Heart right ventricle (tissue), 16 donors: ENCODE measurements at regions of chr17 and their contacts with region 1.

Region 1: DNA sequence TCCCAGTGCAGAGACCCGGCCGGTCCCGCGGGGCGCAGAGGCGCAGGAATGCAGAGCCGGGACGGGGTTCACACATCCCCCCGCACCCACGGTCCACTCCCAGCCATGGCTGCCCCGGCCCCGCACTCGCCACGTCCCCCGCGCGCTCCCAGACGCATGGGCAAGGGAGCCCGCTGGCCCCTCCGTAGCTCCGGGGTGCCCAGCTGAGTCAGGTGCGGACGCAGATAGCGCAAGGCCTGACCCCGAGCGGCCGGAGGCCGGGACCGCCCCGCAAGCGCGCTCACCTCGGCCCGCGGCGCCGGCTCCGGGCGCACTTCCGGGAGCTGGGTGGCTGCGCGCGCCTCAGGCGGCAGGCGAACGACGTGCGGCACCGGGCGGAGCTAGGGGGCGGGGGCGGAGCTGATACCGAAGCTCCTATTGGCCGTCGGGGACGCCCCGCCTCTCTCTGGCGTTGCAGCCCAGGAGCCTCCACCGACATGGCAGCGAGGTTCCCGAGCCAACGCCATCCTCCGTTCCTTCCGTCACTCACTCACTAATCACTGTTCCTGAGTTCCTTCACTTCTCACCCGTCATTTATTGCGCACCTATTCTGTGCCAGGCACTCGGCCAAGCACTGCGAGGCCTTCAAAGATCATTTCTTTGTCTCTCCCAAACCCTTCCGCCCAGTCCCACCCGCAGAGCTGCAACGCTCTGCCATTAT is at the start of gene ZNF18:
- DNase-seq: peak; percentile 96 to 98
- ATAC-seq: peak; percentile 99 to 100 (median 100)
- H3K4me3 ChIP-seq: peak within 1 kb of the TSS; percentile 72 to 96 (median 81)
- H3K27ac ChIP-seq: peak within 1 kb of the TSS; percentile 44 to 95 (median 90)
- H3K4me1 ChIP-seq: peaks cover 0 to 24% (median 11%) of the 10 kb centered on the region in 9 donors
- H3K27me3 ChIP-seq: no peaks in the 10 kb centered on the region
- CTCF ChIP-seq: peak in 3 of 9 donors; percentile 5 to 19 (median 17)
- total RNA-seq, gene ZNF18: 4.0 to 5.7 (median 4.6) TPM

Region 2: DNA sequence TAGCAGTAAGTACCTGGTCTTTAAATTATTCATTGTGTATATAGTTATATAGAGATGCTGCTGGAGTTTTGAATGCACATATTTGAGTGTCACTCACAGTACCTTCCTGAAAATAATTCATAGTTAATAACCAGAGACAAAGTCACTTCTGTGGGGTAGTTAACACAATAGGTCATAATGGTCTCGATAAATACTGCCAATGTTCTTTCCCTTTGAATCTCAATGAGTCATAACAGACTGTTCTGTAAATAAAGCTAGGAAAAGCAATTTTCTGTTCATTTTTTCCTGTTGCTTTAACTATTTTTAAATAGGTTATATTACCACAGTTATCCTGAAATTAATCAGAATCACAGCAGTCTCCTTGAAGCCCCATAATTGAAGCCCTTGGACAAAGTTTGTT is 110.6 kb after region 1 on chr17:
- intact Hi-C with region 1: loop called in 1 of 10 experiments (anchors 10 kb)
- DNase-seq: no peak
- ATAC-seq: no peak
- H3K4me3 ChIP-seq: no peak overlapping the region
- H3K27ac ChIP-seq: no peak overlapping the region
- H3K4me1 ChIP-seq: peaks cover 0 to 35% (median 12%) of the 10 kb centered on the region in 9 donors
- H3K27me3 ChIP-seq: no peaks in the 10 kb centered on the region
- CTCF ChIP-seq: no peak